Activated CD4-positive, alpha-beta memory T cell treated with anti-CD3 and anti-CD28 coated beads for 36 hours (primary cell): ENCODE measurements at regions of chr9 and their contacts with region 1.

Region 1: DNA sequence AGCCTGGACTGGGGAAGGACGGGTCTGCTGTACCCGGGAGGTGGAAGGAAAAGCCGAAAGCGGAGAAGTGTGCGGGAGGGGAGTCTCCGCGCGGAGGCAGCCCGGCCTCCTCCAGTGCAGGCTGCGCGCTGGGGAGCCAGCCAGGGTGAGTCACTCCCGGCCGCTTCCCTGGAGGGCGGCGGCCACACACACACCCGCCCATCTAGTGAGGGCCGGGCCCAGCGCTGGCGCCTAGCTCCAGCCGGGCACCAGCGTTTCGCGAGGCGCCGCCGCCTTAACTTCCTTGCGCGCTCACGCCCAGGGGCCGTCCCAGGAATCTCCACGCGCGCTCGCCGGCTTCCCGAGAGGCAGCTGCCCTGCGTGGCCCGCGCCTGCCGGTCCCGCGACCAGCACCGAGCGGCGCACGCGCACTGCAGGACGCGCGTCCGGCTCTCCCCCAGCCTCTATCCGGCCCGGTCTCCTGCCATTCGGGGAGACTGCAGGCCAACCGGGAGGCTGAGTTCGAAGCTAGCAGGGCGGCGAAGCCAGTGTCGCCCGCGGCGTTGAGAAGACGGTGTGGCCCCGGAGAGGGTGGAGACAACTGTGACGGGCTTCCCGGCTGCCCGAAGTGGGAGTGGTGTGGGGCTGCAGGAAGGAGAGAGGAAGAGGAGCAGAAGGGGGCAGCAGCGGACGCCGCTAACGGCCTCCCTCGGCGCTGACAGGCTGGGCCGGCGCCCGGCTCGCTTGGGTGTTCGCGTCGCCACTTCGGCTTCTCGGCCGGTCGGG is at the start of gene JAK2:
- DNase-seq: peak; percentile 91
- H3K4me3 Mint-ChIP-seq: peak within 1 kb of the TSS; percentile 90
- H3K27ac Mint-ChIP-seq: peak within 1 kb of the TSS; percentile 96
- H3K4me1 Mint-ChIP-seq: peaks cover 52% of the 10 kb centered on the region
- H3K27me3 Mint-ChIP-seq: no peaks in the 10 kb centered on the region
- total RNA-seq, gene JAK2: 23.2 to 25.5 TPM

Region 2: GRCh38 chr9:3525836-3526164 is 1459.0 kb before region 1 on chr9 and contains the start of gene RFX3:
- CTCF ChIA-PET with region 1: no interaction called
- POLR2A ChIA-PET with region 1: no interaction called
- intact Hi-C with region 1: loop called (anchors 5 kb)
- DNase-seq: peak; percentile 95
- H3K4me3 Mint-ChIP-seq: peak within 1 kb of the TSS; percentile 99
- H3K27ac Mint-ChIP-seq: peak within 1 kb of the TSS; percentile 99
- H3K4me1 Mint-ChIP-seq: peaks cover 42% of the 10 kb centered on the region
- H3K27me3 Mint-ChIP-seq: no peaks in the 10 kb centered on the region
- total RNA-seq, gene RFX3: 12.2 to 13.4 TPM

Region 3: DNA sequence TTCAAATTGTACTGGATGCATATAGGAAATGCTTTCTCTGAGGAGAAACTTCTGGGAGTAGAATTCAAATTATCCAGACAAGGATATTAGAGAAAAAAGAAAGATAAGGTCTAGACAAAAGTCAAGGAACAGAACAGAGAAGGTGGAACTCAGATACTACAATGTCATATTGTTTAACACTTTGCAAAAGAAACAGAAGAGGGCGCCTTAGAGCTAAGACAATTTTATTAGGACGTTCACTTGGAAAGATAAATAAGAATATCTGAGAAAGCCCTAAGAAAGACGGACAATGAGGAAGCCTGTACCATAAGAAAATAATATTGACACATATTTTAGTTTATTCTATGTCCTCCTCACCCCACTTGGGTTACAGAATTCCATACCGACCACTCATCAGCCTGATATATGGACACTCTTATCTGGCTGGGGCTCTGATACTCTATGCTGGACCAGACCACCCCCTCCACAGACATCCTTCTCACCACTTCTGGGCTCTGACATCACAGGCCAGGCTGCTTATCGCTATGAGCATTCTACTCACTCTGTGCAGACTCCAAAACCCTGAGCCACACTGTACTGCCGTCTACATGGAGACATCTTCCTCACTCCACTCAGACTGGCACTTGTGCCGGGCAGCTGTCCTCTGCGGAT is 234.7 kb before region 1 on chr9:
- CTCF ChIA-PET with region 1: interaction called, 21 read pairs
- POLR2A ChIA-PET with region 1: no interaction called
- intact Hi-C with region 1: no loop called
- DNase-seq: no peak
- H3K4me3 Mint-ChIP-seq: no peak overlapping the region
- H3K27ac Mint-ChIP-seq: no peak overlapping the region
- H3K4me1 Mint-ChIP-seq: peaks cover 20% of the 10 kb centered on the region
- H3K27me3 Mint-ChIP-seq: no peaks in the 10 kb centered on the region

Region 4: GRCh38 chr9:4832786-4833579 is 151.8 kb before region 1 on chr9:
- CTCF ChIA-PET with region 1: interaction called, 10 read pairs
- POLR2A ChIA-PET with region 1: no interaction called
- intact Hi-C with region 1: loop called (anchors 1 kb)
- DNase-seq: peak; percentile 80
- H3K4me3 Mint-ChIP-seq: no peak overlapping the region
- H3K27ac Mint-ChIP-seq: peak overlapping the region; percentile 91
- H3K4me1 Mint-ChIP-seq: peaks cover 47% of the 10 kb centered on the region
- H3K27me3 Mint-ChIP-seq: no peaks in the 10 kb centered on the region

Region 5: DNA sequence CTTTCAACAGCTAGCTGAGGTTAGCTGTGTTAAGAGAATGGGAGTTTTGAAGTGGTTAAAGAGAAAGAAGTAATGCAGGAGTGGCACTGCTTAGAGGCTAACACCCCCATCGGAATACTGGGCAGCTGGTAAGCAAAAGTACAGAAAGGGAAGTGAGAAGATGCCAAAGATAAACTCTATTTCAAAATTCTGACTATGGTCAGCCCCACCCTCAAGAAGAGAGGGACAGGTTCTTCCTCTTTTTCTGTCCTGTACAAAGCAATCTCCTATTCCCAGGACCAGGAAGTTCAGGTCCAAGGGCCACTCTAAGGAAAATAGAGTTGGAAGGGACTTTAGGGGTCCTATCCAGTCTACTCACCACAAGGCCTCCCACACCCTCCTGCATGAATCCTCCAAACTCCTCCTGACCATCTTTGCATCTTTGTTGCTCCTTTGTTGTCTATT is 45.7 kb before region 1 on chr9:
- CTCF ChIA-PET with region 1: interaction called, 7 read pairs
- POLR2A ChIA-PET with region 1: interaction called, 4 read pairs
- intact Hi-C with region 1: loop called (anchors 1 kb)
- DNase-seq: peak; percentile 25
- H3K4me3 Mint-ChIP-seq: no peak overlapping the region
- H3K27ac Mint-ChIP-seq: peak overlapping the region; percentile 91
- H3K4me1 Mint-ChIP-seq: peaks cover 74% of the 10 kb centered on the region
- H3K27me3 Mint-ChIP-seq: no peaks in the 10 kb centered on the region

Region 6: GRCh38 chr9:5052838-5053237 is 68.0 kb after region 1 on chr9:
- CTCF ChIA-PET with region 1: no interaction called
- POLR2A ChIA-PET with region 1: no interaction called
- intact Hi-C with region 1: no loop called
- DNase-seq: no peak
- H3K4me3 Mint-ChIP-seq: no peak overlapping the region
- H3K27ac Mint-ChIP-seq: no peak overlapping the region
- H3K4me1 Mint-ChIP-seq: no peaks in the 10 kb centered on the region
- H3K27me3 Mint-ChIP-seq: no peaks in the 10 kb centered on the region

Region 7: DNA sequence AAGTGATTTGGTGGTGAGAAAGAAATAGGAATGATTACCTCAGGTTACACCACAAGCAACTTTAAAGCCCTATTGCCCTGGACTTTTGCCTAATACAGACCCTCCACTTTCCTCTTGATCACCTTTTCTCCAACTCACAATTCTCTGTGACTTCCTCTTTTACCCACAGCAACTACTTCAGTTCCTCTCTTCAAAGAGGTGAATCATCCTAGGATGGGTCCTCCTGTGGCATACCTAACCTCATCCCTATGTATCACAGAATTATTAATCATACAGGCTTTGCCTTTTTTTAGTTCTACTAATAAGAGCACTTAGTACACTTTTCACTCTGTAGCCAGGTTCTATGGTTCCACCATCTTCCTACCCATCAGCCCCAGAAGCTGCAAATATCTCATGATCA is 220.3 kb after region 1 on chr9:
- CTCF ChIA-PET with region 1: no interaction called
- POLR2A ChIA-PET with region 1: no interaction called
- intact Hi-C with region 1: no loop called
- DNase-seq: no peak
- H3K4me3 Mint-ChIP-seq: no peak overlapping the region
- H3K27ac Mint-ChIP-seq: no peak overlapping the region
- H3K4me1 Mint-ChIP-seq: peaks cover 3% of the 10 kb centered on the region
- H3K27me3 Mint-ChIP-seq: no peaks in the 10 kb centered on the region

Region 8: DNA sequence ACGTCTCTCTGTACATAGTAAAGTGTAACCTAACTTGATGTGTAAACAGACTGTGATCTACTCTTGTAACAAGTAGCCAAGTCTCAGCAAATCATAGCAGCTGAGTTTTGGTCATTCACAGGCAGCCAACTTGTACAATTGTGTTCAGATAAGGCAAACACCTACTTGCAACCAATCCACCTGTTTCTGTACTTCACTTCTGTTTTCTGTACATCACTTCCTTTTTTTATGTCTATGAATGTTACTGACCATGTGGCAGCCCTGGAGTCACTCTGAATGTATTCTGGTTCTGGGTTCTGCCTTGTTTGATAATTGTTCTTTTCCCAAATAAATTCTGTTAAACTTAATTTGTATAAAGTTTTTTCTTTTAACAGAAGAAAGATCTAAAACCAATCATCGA is 293.7 kb after region 1 on chr9:
- CTCF ChIA-PET with region 1: no interaction called
- POLR2A ChIA-PET with region 1: no interaction called
- intact Hi-C with region 1: no loop called
- DNase-seq: no peak
- H3K4me3 Mint-ChIP-seq: no peak overlapping the region
- H3K27ac Mint-ChIP-seq: no peak overlapping the region
- H3K4me1 Mint-ChIP-seq: no peaks in the 10 kb centered on the region
- H3K27me3 Mint-ChIP-seq: no peaks in the 10 kb centered on the region

Region 9: DNA sequence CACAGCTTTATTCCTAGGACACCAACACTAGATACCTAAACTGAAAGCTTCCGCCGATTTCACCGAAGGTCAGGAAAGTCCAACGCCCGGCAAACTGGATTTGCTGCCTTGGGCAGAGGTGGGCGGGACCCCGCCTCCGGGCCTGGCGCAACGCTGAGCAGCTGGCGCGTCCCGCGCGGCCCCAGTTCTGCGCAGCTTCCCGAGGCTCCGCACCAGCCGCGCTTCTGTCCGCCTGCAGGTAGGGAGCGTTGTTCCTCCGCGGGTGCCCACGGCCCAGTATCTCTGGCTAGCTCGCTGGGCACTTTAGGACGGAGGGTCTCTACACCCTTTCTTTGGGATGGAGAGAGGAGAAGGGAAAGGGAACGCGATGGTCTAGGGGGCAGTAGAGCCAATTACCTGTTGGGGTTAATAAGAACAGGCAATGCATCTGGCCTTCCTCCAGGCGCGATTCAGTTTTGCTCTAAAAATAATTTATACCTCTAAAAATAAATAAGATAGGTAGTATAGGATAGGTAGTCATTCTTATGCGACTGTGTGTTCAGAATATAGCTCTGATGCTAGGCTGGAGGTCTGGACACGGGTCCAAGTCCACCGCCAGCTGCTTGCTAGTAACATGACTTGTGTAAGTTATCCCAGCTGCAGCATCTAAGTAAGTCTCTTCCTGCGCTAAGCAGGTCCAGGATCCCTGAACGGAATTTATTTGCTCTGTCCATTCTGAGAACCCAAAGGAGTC is 465.7 kb after region 1 on chr9 and contains the start of gene CD274:
- CTCF ChIA-PET with region 1: interaction called, 3 read pairs
- POLR2A ChIA-PET with region 1: no interaction called
- intact Hi-C with region 1: loop called (anchors 2 kb)
- DNase-seq: peak; percentile 92
- H3K4me3 Mint-ChIP-seq: peak within 1 kb of the TSS; percentile 86
- H3K27ac Mint-ChIP-seq: peak within 1 kb of the TSS; percentile 90
- H3K4me1 Mint-ChIP-seq: peaks cover 59% of the 10 kb centered on the region
- H3K27me3 Mint-ChIP-seq: no peaks in the 10 kb centered on the region
- total RNA-seq, gene CD274: 28.3 to 32.4 TPM